ENCODE measurements at regions of chr19 and their contacts with region 1.

Region 1: DNA sequence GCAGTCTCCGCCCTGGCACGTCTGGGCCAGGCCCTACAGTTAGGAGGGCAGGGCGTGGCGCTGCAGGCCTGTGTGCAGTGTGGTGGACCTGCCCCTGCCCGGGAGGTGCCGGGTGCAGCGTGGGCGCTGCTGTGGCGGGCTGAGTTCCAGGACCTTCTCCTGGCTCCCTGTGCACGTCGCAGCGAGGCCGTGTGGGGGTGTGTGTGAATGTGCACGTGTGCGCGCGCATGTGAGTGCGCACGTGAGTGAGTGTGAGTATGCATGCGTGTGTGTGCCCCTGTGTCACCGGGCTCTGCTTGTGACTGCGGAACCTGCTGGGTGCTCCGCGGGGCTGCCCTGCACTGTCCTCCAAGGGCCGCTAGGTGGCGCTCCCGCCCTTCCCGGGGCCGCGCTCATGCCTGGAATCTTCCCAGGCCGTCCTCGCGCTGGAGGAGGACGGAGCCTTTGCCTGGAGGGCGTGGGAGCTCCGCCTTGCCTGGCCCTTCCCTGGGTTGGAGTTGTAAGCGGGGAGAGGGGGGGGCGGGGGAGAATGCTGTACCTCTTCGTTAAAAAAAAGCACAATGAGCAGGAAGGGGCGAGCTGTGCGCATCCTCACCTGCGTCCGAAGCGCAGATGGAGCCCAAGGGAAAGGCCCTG is 79.3 kb downstream of the KDM4B start:
- DNase-seq: peak; percentile 69 to 90
- H3K4me3 ChIP-seq: peak overlapping the region; percentile 15 to 36
- H3K27ac ChIP-seq: peak overlapping the region; percentile 60 to 64
- H3K4me1 ChIP-seq: peaks cover 8 to 44% (median 39%) of the 10 kb centered on the region in 4 donors
- H3K27me3 ChIP-seq: no peaks in the 10 kb centered on the region
- CTCF ChIP-seq: peak; percentile 99 to 100

Region 2: DNA sequence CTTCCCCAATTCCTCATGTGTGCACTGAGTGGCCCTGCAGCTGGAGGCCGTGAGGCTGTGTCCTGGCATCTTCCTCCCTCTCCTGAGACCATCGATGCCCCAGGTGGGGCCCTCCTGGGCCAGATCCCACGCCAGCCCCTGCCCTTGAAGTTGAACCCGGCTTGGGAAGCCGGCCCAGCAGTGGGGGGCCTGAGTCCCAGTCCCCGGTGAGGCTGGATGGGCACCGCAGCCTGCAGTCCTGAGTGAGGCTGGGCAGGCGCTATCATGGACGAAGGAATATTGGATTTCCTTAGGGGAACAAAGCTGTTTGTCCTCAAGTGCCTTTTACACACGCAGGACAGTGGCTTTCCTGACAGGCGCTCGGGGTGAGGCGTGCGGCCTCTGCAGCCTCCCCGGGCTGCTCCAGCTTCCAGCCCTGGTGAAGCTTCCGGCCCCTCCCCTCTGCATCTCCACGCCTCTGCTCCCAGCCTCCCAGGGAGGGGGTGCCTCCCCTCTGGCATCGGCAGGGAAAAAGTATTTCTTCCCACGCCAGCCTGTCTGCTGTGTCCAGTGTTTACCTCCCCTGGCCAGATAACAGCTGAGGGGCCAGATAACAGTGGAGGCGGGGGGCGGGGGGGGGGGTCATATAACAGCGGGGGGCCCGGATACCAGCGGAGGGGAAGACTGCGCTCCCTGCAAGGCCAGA is 80.2 kb after region 1 on chr19:
- intact Hi-C with region 1: loop called (anchors 5 kb)
- DNase-seq: peak; percentile 51 to 86
- H3K4me3 ChIP-seq: peak overlapping the region in 1 of 2 donors; percentile 13
- H3K27ac ChIP-seq: peak overlapping the region; percentile 17 to 55
- H3K4me1 ChIP-seq: peaks cover 0 to 39% (median 30%) of the 10 kb centered on the region in 4 donors
- H3K27me3 ChIP-seq: no peaks in the 10 kb centered on the region
- CTCF ChIP-seq: no peak

Region 3: GRCh38 chr19:5577785-5578493 is 529.7 kb after region 1 on chr19:
- intact Hi-C with region 1: loop called (anchors 5 kb)
- DNase-seq: no peak
- H3K4me3 ChIP-seq: no peak overlapping the region
- H3K27ac ChIP-seq: no peak overlapping the region
- H3K4me1 ChIP-seq: peaks cover 0 to 6% (median 4%) of the 10 kb centered on the region in 4 donors
- H3K27me3 ChIP-seq: no peaks in the 10 kb centered on the region
- CTCF ChIP-seq: peak; percentile 85 to 99

Measured in tibial artery (tissue), 4 donors.